ENCODE measurements at regions of chr2 and their contacts with region 1.

Region 1: GRCh38 chr2:170092436-170093060 is 85.4 kb upstream of the MYO3B start:
- DNase-seq: peak; percentile 38
- ATAC-seq: peak; percentile 18; the same call in 1 of the 2 replicates
- H3K4me3 ChIP-seq: no peak overlapping the region
- H3K27ac ChIP-seq: no peak overlapping the region
- H3K4me1 ChIP-seq: no peaks in the 10 kb centered on the region
- H3K27me3 ChIP-seq: no peaks in the 10 kb centered on the region
- CTCF ChIP-seq: no peak
- POLR2A ChIP-seq: no peak
- RAD21 ChIP-seq: no peak

Region 2: DNA sequence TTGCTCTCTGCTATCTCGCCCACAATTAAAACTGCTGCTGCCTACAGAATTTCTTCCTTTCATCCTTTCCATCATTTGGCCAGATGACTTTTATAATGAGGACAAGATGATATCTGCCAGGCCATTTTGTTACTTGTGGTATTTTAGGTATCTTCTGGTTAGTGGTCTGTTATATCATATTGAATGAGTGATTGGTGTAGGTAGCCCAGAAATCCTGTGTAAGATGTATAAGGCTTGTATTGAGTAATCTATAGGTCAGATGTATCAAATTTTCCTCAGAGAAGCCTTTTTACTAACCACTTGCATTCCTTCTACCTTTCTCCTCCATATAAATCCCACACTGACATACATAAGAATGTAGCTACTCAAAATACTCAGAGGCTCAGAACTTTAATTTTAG is 147.0 kb before region 1 on chr2:
- CTCF ChIA-PET with region 1: no interaction called
- POLR2A ChIA-PET with region 1: no interaction called
- dilution Hi-C with region 1: no loop called
- in situ Hi-C with region 1: no loop called
- intact Hi-C with region 1: no loop called
- DNase-seq: no peak
- ATAC-seq: no peak
- H3K4me3 ChIP-seq: no peak overlapping the region
- H3K27ac ChIP-seq: no peak overlapping the region
- H3K4me1 ChIP-seq: no peaks in the 10 kb centered on the region; the same call in 1 of the 2 replicates
- H3K27me3 ChIP-seq: no peaks in the 10 kb centered on the region
- CTCF ChIP-seq: no peak
- POLR2A ChIP-seq: no peak
- RAD21 ChIP-seq: no peak

Region 3: DNA sequence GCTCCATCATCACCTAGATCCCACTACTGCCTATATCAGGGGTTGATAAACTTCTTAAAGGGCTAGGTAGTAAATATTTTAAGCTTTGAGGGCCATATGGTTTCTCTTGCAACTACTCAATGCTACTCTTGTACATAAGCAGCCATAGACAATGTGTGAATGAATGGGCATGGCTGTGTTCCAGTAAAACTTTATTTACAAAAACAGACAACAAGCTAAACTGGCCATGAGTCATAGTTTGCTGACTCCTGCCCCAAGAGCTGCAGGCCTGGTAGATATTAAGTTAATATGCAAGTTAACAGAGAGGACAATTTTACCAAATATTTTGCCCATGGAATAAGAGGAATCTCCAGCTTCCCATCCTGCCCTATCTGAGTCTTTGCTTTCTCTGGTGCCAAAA is 55.6 kb after region 1 on chr2:
- CTCF ChIA-PET with region 1: no interaction called
- POLR2A ChIA-PET with region 1: no interaction called
- dilution Hi-C with region 1: no loop called
- in situ Hi-C with region 1: no loop called
- intact Hi-C with region 1: loop called (anchors 5 kb)
- DNase-seq: peak; percentile 14
- ATAC-seq: peak; percentile 54
- H3K4me3 ChIP-seq: no peak overlapping the region
- H3K27ac ChIP-seq: no peak overlapping the region
- H3K4me1 ChIP-seq: no peaks in the 10 kb centered on the region
- H3K27me3 ChIP-seq: no peaks in the 10 kb centered on the region
- CTCF ChIP-seq: no peak
- POLR2A ChIP-seq: no peak
- RAD21 ChIP-seq: no peak